PC-9 (cell line): ENCODE measurements at regions of chr10 and their contacts with region 1.

Region 1: GRCh38 chr10:103781329-103782061 is 73.9 kb downstream of the SH3PXD2A start:
- DNase-seq: peak; percentile 49 to 92
- H3K4me3 ChIP-seq: no peak overlapping the region
- H3K27ac ChIP-seq: peak overlapping the region; percentile 79
- H3K4me1 ChIP-seq: peaks cover 41% of the 10 kb centered on the region
- H3K27me3 ChIP-seq: no peaks in the 10 kb centered on the region
- CTCF ChIP-seq: peak; percentile 59; the same call in 1 of the 2 replicates

Region 2: GRCh38 chr10:103745341-103746227 is 35.9 kb before region 1 on chr10:
- CTCF ChIA-PET with region 1: no interaction called
- POLR2A ChIA-PET with region 1: no interaction called
- intact Hi-C with region 1: loop called (anchors 2 kb)
- DNase-seq: peak; percentile 84 to 90
- H3K4me3 ChIP-seq: no peak overlapping the region
- H3K27ac ChIP-seq: peak overlapping the region; percentile 85
- H3K4me1 ChIP-seq: peaks cover 55% of the 10 kb centered on the region
- H3K27me3 ChIP-seq: no peaks in the 10 kb centered on the region
- CTCF ChIP-seq: no peak; the same call in 1 of the 2 replicates

Region 3: DNA sequence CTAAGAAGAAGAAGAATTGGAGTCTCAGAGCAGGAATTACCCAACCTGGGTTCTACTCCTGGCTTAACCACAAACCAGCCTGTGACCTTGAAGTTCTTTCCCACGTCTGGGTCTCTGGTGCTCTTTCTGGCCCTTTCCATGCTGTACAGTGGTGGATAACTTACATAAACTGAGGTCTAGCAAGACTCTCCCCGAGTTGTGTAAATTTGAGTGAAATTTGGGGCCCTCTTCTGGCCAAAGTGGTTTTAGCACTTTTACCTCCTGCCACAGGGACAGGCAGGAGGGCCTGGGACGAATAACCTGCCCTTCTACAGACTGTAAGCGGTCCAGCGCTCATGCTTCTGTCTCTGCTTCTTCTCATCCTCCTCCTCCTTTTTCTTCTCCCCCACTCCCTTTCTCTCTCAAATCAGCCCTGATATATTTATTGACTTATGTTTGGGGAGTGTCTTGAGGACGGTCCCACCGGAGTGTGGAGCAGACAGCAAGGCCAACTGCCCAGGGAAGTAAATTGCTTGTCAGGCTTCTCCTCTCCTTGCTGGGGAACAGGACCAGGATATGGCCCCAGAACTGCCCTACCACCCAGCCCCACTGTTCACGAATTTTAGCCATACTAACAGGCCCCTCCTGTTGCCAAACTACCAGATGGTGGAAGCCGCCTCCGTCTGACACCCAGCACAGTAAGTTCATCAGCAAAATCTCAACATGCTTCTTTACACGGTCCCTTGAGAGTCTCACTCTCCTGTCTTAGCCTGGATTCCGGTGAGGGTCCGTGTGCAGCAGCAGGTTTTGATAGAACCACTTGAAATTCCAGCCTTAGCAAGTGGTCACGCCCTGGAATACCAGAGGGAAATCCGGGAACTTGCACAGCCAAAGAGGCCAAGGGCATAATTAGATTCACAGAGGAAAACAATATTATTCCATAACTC is 77.9 kb after region 1 on chr10:
- CTCF ChIA-PET with region 1: no interaction called
- POLR2A ChIA-PET with region 1: no interaction called
- intact Hi-C with region 1: loop called (anchors 1 kb)
- DNase-seq: peak in 1 of 2 experiments; percentile 50
- H3K4me3 ChIP-seq: no peak overlapping the region
- H3K27ac ChIP-seq: no peak overlapping the region
- H3K4me1 ChIP-seq: peaks cover 2% of the 10 kb centered on the region; the same call in 1 of the 2 replicates
- H3K27me3 ChIP-seq: no peaks in the 10 kb centered on the region
- CTCF ChIP-seq: peak; percentile 75